Activated CD4-positive, alpha-beta T cell treated with anti-CD3 and anti-CD28 coated beads for 36 hours (primary cell): ENCODE measurements at regions of chr20 and their contacts with region 1.

Region 1: DNA sequence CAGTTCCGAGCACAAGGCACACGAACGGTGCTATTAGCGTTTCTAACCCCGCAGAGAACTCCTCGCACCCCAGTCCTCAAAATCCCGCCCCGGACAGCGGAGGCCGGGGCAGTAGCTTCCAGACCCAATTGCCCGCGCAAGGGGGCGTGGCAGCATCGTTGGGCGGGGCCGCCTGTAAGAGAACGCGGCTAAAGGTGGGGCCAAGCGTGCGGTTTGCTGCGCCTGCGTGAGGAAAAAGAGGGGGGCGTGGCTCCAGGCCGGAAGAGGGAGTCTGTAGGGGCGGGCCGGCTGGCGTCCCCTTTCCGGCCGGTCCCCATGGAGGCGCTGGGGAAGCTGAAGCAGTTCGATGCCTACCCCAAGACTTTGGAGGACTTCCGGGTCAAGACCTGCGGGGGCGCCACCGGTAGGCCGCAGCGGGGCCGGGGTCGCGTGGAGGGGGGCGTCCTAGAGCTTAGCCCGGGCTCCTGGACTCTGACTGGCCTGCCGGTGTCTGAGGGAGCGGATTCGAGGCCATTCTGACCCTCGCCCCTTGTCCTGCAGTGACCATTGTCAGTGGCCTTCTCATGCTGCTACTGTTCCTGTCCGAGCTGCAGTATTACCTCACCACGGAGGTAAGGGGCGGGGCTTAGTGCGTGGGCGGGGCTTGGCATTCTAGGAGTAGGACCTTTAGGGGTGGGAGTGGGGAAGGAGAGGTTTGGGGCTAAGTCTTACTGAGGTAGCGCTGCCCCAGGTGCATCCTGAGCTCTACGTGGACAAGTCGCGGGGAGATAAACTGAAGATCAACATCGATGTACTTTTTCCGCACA is at the start of gene ERGIC3:
- DNase-seq: peak; percentile 99
- ATAC-seq: peak; percentile 99
- H3K4me3 Mint-ChIP-seq: peak within 1 kb of the TSS; percentile 83
- H3K27ac Mint-ChIP-seq: peak within 1 kb of the TSS; percentile 83
- H3K4me1 Mint-ChIP-seq: peaks cover 15% of the 10 kb centered on the region
- H3K27me3 Mint-ChIP-seq: no peaks in the 10 kb centered on the region
- total RNA-seq, gene ERGIC3: 109 to 127 TPM

Region 2: DNA sequence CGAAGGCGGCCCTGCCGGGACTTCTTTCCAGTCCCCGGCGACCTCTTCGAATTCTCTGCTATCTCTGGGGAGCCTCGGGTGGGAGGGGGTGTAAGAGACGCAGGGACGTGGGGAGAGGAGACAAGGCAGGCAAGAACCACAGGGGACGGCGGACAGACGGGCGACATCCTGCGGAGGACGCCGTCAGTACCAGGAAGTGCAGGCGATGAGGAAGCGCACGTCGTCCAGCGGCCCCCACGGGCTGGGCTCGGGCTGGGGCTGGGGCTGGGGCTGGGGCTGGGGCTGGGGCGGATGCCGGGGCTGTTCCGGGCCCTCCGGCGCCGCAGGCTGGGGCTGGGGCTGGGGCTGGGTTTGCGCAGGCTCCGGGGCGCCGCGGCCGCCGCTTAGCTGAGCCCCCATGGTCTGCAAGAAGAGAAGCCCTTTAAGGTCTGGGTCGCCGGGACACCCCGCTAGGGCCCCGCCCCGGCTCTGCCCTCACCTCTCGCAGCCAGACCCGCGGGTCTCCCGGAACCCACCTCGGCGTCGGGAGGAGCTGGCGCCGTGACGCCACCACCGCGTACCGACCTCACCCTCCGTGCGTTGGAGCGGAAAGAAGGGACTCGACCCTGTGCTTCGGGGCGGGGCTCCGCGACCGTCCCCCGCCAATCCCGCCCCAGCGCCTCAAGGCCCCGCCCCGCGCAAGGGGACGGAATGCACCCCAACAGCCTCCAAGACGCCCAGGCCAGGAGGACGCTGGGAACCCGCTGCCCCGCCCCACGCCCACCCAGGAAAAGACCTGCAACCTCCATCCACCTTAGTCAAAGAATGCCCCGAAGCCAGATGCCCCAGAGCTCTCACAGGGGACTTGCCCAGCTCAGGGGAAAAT is 264.2 kb before region 1 on chr20 and contains the start of gene MMP24OS:
- CTCF ChIA-PET with region 1: no interaction called
- POLR2A ChIA-PET with region 1: no interaction called
- intact Hi-C with region 1: loop called in 1 of 2 experiments (anchors 1 kb)
- DNase-seq: peak; percentile 94
- ATAC-seq: peak; percentile 96
- H3K4me3 Mint-ChIP-seq: peak within 1 kb of the TSS; percentile 99
- H3K27ac Mint-ChIP-seq: peak within 1 kb of the TSS; percentile 97
- H3K4me1 Mint-ChIP-seq: peaks cover 9% of the 10 kb centered on the region
- H3K27me3 Mint-ChIP-seq: no peaks in the 10 kb centered on the region
- total RNA-seq, gene MMP24OS: 44.6 to 56.8 TPM

Region 3: DNA sequence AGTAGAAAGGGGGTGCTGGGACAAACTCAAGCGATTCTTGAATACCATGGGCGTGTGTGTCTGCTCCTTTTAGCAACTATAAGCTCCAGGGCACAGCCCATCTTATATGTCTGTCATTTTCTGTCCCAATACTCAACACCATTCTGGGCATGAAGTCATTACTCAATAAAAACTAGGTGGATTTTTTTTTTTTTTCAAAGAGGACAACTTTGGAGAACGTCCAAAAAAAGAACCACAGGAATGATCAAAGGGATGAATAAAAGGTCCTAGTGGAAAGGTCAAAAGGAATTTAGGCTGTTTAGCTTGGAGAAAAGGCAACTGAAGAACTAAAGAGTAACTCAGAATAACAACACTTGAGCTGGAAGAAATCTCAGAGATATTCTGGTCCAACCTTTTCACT is 154.7 kb before region 1 on chr20:
- CTCF ChIA-PET with region 1: no interaction called
- POLR2A ChIA-PET with region 1: no interaction called
- intact Hi-C with region 1: no loop called
- DNase-seq: no peak
- ATAC-seq: no peak
- H3K4me3 Mint-ChIP-seq: no peak overlapping the region
- H3K27ac Mint-ChIP-seq: no peak overlapping the region
- H3K4me1 Mint-ChIP-seq: peaks cover 2% of the 10 kb centered on the region
- H3K27me3 Mint-ChIP-seq: no peaks in the 10 kb centered on the region

Region 4: GRCh38 chr20:35699127-35699975 is 157.4 kb after region 1 on chr20 and contains the starts of genes NFS1 and ROMO1:
- CTCF ChIA-PET with region 1: no interaction called
- POLR2A ChIA-PET with region 1: no interaction called
- intact Hi-C with region 1: loop called in 1 of 2 experiments (anchors 1 kb)
- DNase-seq: peak; percentile 94
- ATAC-seq: peak; percentile 92
- H3K4me3 Mint-ChIP-seq: peak within 1 kb of the TSS; percentile 87
- H3K27ac Mint-ChIP-seq: peak within 1 kb of the TSS; percentile 98
- H3K4me1 Mint-ChIP-seq: peaks cover 44% of the 10 kb centered on the region
- H3K27me3 Mint-ChIP-seq: no peaks in the 10 kb centered on the region
- total RNA-seq, gene NFS1: 43.2 to 44.6 TPM
- total RNA-seq, gene ROMO1: 50.4 to 112 TPM

Region 5: GRCh38 chr20:36050436-36051317 is 508.7 kb after region 1 on chr20:
- CTCF ChIA-PET with region 1: no interaction called
- POLR2A ChIA-PET with region 1: no interaction called
- intact Hi-C with region 1: loop called in 1 of 2 experiments (anchors 1 kb)
- DNase-seq: peak; percentile 95
- ATAC-seq: peak; percentile 98
- H3K4me3 Mint-ChIP-seq: peak overlapping the region; percentile 96
- H3K27ac Mint-ChIP-seq: peak overlapping the region; percentile 91
- H3K4me1 Mint-ChIP-seq: peaks cover 34% of the 10 kb centered on the region
- H3K27me3 Mint-ChIP-seq: no peaks in the 10 kb centered on the region

Region 6: GRCh38 chr20:36439040-36439730 is 897.2 kb after region 1 on chr20:
- CTCF ChIA-PET with region 1: no interaction called
- POLR2A ChIA-PET with region 1: no interaction called
- intact Hi-C with region 1: loop called in 1 of 2 experiments (anchors 5 kb)
- DNase-seq: peak; percentile 81
- ATAC-seq: peak; percentile 45
- H3K4me3 Mint-ChIP-seq: no peak overlapping the region
- H3K27ac Mint-ChIP-seq: no peak overlapping the region
- H3K4me1 Mint-ChIP-seq: peaks cover 2% of the 10 kb centered on the region
- H3K27me3 Mint-ChIP-seq: no peaks in the 10 kb centered on the region